ENCODE measurements at regions of chr10 and their contacts with region 1.

Region 1: DNA sequence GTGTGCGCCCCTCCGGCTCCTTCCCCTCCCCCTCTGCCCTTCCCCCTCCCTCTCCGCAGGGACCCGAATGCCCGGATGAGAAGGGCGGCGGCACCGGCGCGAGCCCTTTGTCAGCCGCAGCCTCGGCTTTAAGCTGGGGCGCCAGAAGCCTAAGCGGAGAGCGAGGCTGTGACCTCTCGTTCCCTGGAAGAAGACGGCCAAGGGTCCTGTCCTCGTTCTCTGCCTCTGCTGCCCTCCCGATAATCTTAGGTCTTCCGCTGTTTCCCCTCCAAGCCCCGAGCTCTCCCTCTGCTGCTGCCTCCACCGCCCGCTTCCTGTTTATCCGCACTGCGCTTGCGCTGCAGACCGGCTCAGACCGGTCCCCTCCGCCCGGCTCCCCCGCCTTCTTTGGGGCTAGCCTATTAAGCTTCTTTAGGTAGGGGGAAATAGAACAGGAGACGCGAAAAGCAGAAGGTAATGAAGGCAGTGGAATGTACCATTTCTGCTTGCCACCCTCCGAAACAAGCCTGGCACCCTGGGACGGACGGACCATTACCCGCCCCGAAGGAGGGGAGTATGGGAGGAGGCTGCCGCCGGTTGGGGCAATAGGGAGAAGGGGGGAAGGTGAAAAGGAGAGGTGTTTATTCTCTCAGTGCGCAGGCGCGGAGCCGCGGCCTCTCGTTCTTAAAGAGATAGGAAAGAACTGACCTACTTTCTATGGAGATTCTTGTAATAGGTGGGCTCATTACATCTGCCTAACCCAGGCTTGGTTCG is at the start of gene OGA:
- DNase-seq: peak; percentile 98
- ATAC-seq: peak; percentile 91
- H3K4me3 Mint-ChIP-seq: peak within 1 kb of the TSS; percentile 88
- H3K27ac Mint-ChIP-seq: peak within 1 kb of the TSS; percentile 98
- H3K4me1 Mint-ChIP-seq: peaks cover 26% of the 10 kb centered on the region
- H3K27me3 Mint-ChIP-seq: no peaks in the 10 kb centered on the region
- CTCF ChIP-seq: no peak
- total RNA-seq, gene OGA: 110 to 111 TPM (median 110 TPM) in 3 replicates

Region 2: GRCh38 chr10:101830322-101831168 is 12.2 kb after region 1 on chr10:
- CTCF ChIA-PET with region 1: interaction called, 19 read pairs
- POLR2A ChIA-PET with region 1: interaction called, 30 read pairs
- DNase-seq: peak; percentile 85
- ATAC-seq: peak; percentile 57
- H3K4me3 Mint-ChIP-seq: peak overlapping the region; percentile 78
- H3K27ac Mint-ChIP-seq: peak overlapping the region; percentile 82
- H3K4me1 Mint-ChIP-seq: peaks cover 26% of the 10 kb centered on the region
- H3K27me3 Mint-ChIP-seq: peaks cover 3% of the 10 kb centered on the region
- CTCF ChIP-seq: no peak

Region 3: DNA sequence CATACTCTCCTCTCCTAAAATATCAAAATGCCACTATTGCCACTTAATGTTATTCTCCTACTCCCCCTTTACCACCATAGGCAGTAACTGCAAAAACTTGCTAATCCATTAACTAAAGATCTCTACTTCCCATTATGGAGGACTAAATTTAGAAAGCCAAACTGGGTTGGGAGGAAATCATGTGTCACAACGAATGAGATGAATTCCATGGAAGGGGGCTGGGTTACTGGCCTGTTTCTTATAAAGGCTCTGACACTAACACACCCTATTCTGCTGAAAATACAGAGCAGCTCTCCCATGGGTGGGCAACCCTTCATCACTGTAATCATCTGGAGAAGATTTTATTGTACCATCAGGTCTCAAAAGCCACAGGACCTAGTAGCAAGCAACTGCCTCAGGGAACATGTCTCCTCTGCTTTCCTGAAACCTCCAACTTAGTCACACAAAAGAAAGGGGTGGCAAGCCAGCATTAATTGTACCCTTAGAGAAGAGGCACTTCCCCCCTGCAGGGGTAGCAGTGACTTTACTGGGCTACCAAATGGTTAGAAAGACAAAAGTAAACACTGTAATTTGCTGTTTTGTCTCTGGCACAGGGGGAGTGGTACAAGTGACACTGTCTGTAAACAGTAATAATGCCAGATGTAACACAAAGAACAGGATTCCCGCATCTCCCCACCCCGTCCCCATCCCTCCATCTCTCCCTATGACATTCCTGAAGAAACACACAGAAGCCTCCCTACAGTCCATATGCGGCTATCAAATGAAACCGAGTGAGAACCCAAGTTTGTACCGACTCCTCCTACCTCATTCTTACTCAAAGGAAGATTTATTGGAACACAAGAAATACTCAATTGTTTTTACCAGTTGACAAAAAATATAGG is 156.0 kb after region 1 on chr10:
- CTCF ChIA-PET with region 1: no interaction called
- POLR2A ChIA-PET with region 1: interaction called, 17 read pairs
- DNase-seq: no peak
- ATAC-seq: peak; percentile 38
- H3K4me3 Mint-ChIP-seq: no peak overlapping the region
- H3K27ac Mint-ChIP-seq: peak overlapping the region; percentile 5; the same call in 1 of the 2 replicates
- H3K4me1 Mint-ChIP-seq: peaks cover 17% of the 10 kb centered on the region
- H3K27me3 Mint-ChIP-seq: no peaks in the 10 kb centered on the region
- CTCF ChIP-seq: no peak

Measured in WTC11 (cell line).